ENCODE measurements at regions of chr15 and their contacts with region 1.

Region 1: DNA sequence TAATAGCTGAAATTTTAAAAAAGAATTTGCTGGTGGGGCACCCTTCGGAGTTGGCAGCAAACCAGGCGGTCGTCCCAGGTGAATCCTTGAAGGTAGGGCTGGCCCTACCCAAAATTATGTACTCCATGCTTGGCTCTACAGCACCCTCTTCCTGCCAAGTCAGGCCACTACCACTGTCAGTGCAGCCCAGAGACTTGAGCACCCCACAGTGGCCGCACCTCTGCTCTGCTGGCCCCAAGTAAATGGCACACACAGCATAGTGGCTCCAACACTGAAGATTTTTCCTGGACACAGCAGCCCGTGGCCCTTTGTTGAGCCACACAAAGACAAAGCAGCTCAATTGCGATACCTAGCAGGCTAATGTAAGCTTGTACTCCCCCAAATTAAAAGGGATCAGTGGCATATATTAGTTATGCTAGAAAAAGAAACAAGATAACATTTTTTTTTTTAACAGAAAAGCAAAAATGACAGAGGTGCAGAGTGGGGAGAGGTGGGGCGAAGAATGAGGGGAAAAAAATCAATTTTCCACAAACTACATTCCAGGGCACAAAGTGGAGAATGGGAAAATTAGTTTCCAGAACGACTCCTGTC is 250.5 kb downstream of the UACA start:
- DNase-seq: peak; percentile 80
- H3K4me3 Mint-ChIP-seq: no peak overlapping the region
- H3K27ac Mint-ChIP-seq: no peak overlapping the region
- H3K4me1 Mint-ChIP-seq: peaks cover 23% of the 10 kb centered on the region
- H3K27me3 Mint-ChIP-seq: peaks cover 59% of the 10 kb centered on the region

Region 2: GRCh38 chr15:70474471-70475396 is 38.1 kb before region 1 on chr15:
- CTCF ChIA-PET with region 1: interaction called, 11 read pairs
- DNase-seq: peak; percentile 53
- H3K4me3 Mint-ChIP-seq: peak overlapping the region; percentile 43
- H3K27ac Mint-ChIP-seq: peak overlapping the region; percentile 65
- H3K4me1 Mint-ChIP-seq: peaks cover 46% of the 10 kb centered on the region
- H3K27me3 Mint-ChIP-seq: peaks cover 97% of the 10 kb centered on the region

Region 3: GRCh38 chr15:70488002-70488605 is 24.8 kb before region 1 on chr15:
- CTCF ChIA-PET with region 1: interaction called, 223 read pairs
- DNase-seq: peak; percentile 82
- H3K4me3 Mint-ChIP-seq: no peak overlapping the region
- H3K27ac Mint-ChIP-seq: no peak overlapping the region
- H3K4me1 Mint-ChIP-seq: peaks cover 45% of the 10 kb centered on the region
- H3K27me3 Mint-ChIP-seq: peaks cover 90% of the 10 kb centered on the region

Region 4: GRCh38 chr15:70523616-70524015 is 10.7 kb after region 1 on chr15:
- CTCF ChIA-PET with region 1: interaction called, 14 read pairs
- DNase-seq: no peak
- H3K4me3 Mint-ChIP-seq: no peak overlapping the region
- H3K27ac Mint-ChIP-seq: no peak overlapping the region
- H3K4me1 Mint-ChIP-seq: peaks cover 22% of the 10 kb centered on the region
- H3K27me3 Mint-ChIP-seq: peaks cover 28% of the 10 kb centered on the region

Region 5: DNA sequence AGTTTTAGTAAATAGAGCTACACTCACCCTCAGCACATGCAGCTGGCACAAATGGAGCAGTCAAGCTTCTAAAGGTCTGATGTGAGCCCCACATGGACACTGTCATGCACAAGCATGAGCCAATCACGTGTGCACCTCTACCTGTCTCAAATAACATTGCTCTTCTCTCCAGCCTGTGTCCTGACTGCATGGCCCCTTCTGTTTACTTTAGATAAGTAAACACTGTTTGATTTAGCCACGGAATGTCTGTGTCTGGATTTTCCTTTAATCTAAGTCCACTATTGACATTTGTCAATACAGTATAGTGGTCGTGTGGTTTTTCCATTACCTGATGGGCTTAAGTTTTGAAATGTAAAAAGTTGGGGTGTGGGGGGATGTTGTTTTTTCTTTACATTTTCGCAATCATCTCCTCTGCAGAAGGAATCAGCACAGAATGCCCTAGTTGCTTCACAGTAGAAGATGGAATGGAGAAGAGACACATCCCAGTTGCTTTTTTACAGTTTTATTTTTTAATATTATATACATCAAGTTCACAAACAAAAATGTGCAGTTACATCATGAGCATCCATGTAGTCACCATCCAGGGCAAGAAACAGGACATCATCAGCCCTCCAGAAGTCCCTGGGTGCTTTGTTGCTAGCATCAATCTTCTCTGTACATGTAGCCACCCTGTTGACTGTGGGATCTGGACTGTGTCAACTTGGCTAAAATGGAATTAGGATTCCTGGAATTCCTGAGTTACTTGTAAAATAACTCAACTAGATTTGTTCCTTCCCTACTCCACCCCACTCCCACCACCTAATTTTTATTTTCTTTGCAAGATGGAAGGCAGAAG is 104.4 kb after region 1 on chr15:
- CTCF ChIA-PET with region 1: no interaction called
- DNase-seq: no peak
- H3K4me3 Mint-ChIP-seq: no peak overlapping the region
- H3K27ac Mint-ChIP-seq: no peak overlapping the region
- H3K4me1 Mint-ChIP-seq: no peaks in the 10 kb centered on the region
- H3K27me3 Mint-ChIP-seq: peaks cover 39% of the 10 kb centered on the region

Region 6: DNA sequence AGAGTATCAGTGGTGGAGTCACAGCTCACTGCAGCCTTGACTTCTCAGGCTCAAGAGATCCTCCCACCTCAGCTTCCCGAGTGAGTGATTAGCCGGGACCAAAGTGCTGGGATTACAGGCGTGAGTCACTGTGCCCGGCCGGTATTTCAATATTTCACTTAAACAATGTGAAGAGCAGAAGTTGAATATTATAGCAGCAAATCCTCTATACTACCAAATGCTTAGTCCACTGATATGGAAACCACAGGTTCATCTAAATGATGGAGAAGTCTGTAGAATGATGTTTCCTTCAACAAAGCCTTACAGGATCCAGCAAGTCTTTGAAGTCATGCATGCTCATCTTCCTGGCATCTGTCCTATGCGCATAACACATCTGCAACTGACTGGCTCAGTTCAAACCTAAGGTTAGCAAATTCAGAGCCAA is 270.7 kb after region 1 on chr15:
- CTCF ChIA-PET with region 1: no interaction called
- DNase-seq: no peak
- H3K4me3 Mint-ChIP-seq: no peak overlapping the region
- H3K27ac Mint-ChIP-seq: no peak overlapping the region
- H3K4me1 Mint-ChIP-seq: no peaks in the 10 kb centered on the region
- H3K27me3 Mint-ChIP-seq: peaks cover 20% of the 10 kb centered on the region

Measured in activated naive CD4-positive, alpha-beta T cell treated with anti-CD3 and anti-CD28 coated beads, Interleukin-2, amount 10 ng/mL, durations not matched to agents 7 days and 5 days (primary cell).